ENCODE measurements at regions of chr1 and their contacts with region 1.

Region 1: DNA sequence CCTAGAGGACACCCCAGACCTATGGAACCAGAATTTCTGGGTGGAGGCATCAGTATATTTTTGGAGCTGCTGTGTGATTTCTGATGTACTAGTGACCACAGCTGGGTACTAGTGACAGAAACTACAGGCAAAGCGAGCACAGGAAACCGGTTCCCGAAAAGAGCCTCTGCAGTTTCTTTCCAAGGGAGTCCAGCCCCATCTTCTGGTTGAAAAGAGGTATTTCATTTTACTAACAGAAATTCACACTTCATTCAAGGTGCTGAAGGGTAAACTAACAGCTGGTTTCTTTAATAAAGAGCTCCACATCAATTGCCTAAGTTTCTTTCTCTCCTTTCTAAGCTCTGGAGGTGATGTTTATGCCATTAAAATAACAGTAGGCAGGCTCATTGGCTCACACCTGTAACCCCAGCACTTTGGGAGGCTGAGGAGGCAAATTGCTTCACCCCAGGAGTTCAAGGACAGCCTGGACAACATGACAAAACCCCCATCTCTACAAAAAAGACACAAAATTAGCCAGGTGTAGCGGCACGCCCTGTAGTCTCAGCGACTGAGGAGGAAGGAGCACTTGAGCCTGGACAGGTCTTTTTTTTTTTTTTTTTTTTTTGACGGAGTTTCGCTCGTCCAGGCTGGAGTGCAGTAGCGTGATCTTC is 22.0 kb downstream of the THAP3 start:
- DNase-seq: peak in 10 of 14 experiments; percentile 7 to 70 (median 19)
- ATAC-seq: peak; percentile 71
- H3K4me3 ChIP-seq: no peak overlapping the region
- H3K4me3 Mint-ChIP-seq: no peak overlapping the region
- H3K27ac ChIP-seq: no peak overlapping the region
- H3K27ac Mint-ChIP-seq: no peak overlapping the region
- H3K4me1 ChIP-seq: peaks cover 6% of the 10 kb centered on the region
- H3K4me1 Mint-ChIP-seq: peaks cover 6% of the 10 kb centered on the region
- H3K27me3 ChIP-seq: no peaks in the 10 kb centered on the region
- H3K27me3 Mint-ChIP-seq: no peaks in the 10 kb centered on the region
- CTCF ChIP-seq: peak; percentile 70

Region 2: DNA sequence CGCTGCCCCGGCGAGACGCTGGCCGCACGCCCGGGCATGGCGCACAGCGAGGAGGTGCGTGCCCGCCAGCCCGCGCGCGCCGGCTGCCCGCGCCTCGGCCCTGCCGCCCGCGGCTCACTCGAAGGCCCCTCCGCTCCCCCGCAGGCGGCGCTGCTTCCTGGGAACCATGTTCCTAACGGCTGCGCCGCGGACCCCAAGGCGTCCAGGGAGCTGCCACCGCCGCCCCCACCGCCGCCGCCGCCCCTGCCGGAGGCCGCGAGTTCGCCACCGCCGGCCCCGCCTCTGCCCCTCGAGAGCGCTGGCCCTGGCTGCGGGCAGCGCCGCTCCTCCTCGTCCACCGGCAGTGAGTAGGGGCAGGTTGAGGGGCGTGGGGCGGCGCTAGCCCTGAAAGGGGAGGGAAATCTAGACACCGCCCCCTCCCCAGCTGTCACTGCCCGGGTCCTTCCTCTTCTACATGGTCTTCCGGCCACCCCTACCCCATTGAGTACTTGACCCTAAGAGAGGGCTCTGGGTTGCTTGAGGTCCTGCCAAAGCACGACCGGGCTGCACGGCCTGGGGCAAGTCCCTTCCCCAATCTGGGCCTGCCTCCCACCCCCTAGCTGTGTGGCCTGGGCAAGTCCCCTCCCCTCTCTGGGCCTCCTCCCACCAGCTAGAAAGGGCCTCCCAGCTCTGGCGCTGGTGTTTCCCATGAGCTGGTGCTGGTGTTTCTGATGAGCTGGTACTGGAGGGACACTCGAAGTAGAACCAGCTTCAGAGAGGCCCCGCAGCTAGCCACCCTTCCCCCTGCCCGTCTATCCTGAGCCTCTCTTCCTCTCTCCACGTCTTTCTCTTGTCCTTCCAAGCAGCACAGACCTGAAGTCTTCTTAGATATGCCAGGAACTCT is 197.6 kb before region 1 on chr1:
- CTCF ChIA-PET with region 1: no interaction called
- POLR2A ChIA-PET with region 1: no interaction called
- intact Hi-C with region 1: no loop called
- DNase-seq: peak in 6 of 14 experiments; percentile 37 to 80 (median 52)
- ATAC-seq: peak; percentile 39
- H3K4me3 ChIP-seq: no peak overlapping the region
- H3K4me3 Mint-ChIP-seq: peak overlapping the region; percentile 71
- H3K27ac ChIP-seq: no peak overlapping the region
- H3K27ac Mint-ChIP-seq: no peak overlapping the region
- H3K4me1 ChIP-seq: peaks cover 48% of the 10 kb centered on the region
- H3K4me1 Mint-ChIP-seq: peaks cover 42% of the 10 kb centered on the region
- H3K27me3 ChIP-seq: peaks cover 42 to 53% of the 10 kb centered on the region in 2 experiments
- H3K27me3 Mint-ChIP-seq: peaks cover 60% of the 10 kb centered on the region
- CTCF ChIP-seq: no peak

Region 3: GRCh38 chr1:6489799-6490180 is 156.8 kb before region 1 on chr1:
- CTCF ChIA-PET with region 1: interaction called, 6 read pairs
- POLR2A ChIA-PET with region 1: interaction called, 4 read pairs
- intact Hi-C with region 1: loop called (anchors 1 kb)
- DNase-seq: peak; percentile 59 to 90 (median 72)
- ATAC-seq: peak; percentile 58
- H3K4me3 ChIP-seq: peak overlapping the region; percentile 90
- H3K4me3 Mint-ChIP-seq: peak overlapping the region; percentile 82
- H3K27ac ChIP-seq: no peak overlapping the region
- H3K27ac Mint-ChIP-seq: no peak overlapping the region
- H3K4me1 ChIP-seq: peaks cover 58% of the 10 kb centered on the region
- H3K4me1 Mint-ChIP-seq: peaks cover 30% of the 10 kb centered on the region
- H3K27me3 ChIP-seq: peaks cover 12 to 14% of the 10 kb centered on the region in 2 experiments
- H3K27me3 Mint-ChIP-seq: peaks cover 21% of the 10 kb centered on the region
- CTCF ChIP-seq: peak; percentile 96

Region 4: DNA sequence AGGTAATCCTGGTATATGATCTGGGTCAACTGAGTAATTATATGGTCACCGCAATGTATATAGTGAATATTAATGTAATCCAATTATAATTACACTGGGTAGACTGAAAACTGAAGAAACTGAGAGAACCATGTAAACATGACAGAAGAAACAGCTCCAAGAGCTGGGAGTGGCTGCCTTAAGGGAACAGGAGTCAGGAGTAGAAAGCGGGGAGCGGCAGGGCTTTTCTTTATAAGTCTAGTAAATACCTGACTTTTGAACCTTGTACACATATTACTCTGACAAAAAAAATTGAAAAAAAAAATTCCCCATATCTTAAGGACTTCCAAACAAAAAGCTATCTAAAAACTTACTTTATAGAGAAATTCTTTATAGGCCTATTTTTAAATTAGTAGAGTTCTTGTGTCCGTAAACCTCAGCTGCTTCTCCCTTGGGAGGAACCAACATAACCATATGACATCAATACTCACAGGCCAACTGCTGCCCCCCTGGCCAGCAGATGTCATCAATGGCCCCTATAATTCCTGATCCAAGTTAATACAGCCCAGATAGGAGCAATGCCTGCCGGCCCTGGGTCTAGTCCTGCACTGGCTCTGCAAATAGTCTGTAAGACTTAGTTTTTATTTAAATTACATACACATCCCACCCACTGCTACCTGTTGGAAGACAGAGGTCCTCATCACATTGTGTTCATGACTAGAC is 11.9 kb after region 1 on chr1:
- CTCF ChIA-PET with region 1: no interaction called
- POLR2A ChIA-PET with region 1: no interaction called
- intact Hi-C with region 1: no loop called
- DNase-seq: no peak
- ATAC-seq: no peak
- H3K4me3 ChIP-seq: no peak overlapping the region
- H3K4me3 Mint-ChIP-seq: no peak overlapping the region
- H3K27ac ChIP-seq: no peak overlapping the region
- H3K27ac Mint-ChIP-seq: no peak overlapping the region
- H3K4me1 ChIP-seq: peaks cover 4% of the 10 kb centered on the region
- H3K4me1 Mint-ChIP-seq: peaks cover 9% of the 10 kb centered on the region
- H3K27me3 ChIP-seq: no peaks in the 10 kb centered on the region
- H3K27me3 Mint-ChIP-seq: no peaks in the 10 kb centered on the region
- CTCF ChIP-seq: no peak

Measured in CD4-positive, alpha-beta T cell (primary cell).